ENCODE measurements at regions of chr19 and their contacts with region 1.

Region 1: GRCh38 chr19:17859533-17860330 is at the start of gene RPL18A:
- DNase-seq: peak; percentile 100
- H3K4me3 Mint-ChIP-seq: peak within 1 kb of the TSS; percentile 100
- H3K27ac Mint-ChIP-seq: peak within 1 kb of the TSS; percentile 99
- H3K4me1 Mint-ChIP-seq: peaks cover 41% of the 10 kb centered on the region
- H3K27me3 Mint-ChIP-seq: peaks cover 3% of the 10 kb centered on the region
- total RNA-seq, gene RPL18A: 3,104 to 3,138 TPM

Region 2: DNA sequence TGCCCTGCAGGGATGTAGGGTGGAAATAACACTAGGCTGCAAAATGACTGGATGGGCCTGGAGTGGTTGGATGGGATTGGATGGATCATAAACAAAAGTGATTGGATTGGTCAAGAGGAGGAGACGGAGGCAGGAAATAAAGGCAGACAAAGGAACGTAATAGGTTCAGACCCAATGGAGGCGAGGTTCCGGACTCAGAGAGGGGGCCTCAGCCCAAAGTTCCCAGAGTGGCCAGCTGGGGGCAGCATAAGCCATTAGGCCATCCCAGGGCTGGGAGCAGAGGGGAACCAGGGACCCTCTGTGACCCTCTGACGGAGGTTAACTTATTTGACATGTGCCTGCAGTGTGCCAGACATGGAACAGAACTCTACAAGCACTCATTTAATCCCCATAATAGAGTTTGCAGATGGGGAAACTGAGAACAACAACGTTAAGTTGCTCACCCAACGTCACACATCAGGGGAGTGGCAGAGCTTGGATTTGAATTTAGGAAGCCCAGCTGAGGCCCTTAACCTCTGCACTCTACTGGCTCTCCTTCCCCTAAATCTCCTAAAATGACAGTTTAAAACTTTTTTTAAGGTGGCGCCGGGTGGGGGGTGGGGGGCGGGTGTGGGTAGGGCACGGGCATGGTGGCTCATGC is 155.8 kb before region 1 on chr19:
- CTCF ChIA-PET with region 1: interaction called, 41 read pairs
- POLR2A ChIA-PET with region 1: no interaction called
- intact Hi-C with region 1: loop called (anchors 1 kb)
- DNase-seq: peak; percentile 81
- H3K4me3 Mint-ChIP-seq: no peak overlapping the region
- H3K27ac Mint-ChIP-seq: no peak overlapping the region
- H3K4me1 Mint-ChIP-seq: no peaks in the 10 kb centered on the region
- H3K27me3 Mint-ChIP-seq: peaks cover 4% of the 10 kb centered on the region

Region 3: DNA sequence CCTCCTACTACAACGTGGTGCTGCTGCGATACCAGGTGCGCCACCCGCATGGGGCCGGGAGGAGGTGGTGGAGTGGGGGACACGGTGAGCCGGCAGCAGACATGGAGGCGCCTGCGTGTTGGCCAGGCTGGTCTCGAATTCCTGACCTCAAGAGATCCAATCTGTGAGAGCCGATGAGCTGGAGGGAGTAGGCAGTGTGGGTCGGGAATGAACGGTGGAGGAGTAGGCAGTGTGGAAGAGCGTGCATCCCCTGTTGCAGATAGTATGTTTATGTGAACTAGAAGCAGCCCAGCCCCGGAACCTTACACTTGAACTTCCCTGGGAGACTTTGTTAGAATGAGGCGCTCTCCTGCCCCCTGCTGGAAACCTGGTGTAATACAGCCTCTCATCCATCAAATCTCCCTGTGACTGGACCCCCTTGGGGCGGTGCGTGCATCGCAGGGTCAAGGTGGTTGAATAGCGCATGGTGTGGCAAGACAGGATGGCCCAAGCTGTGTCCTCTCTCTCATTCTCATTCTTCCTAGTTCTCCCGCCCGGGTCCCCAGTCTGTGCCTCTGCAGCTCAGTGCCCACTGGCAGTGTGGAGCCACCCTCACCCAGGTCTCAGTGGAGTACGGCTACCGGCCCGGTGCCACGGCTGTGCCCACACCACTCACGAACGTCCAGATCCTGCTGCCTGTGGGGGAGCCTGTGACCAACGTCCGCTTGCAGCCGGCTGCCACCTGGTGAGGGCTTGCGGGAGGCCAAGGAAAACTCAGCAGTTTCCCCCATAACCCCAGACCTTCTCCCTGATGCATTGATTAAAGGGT is 75.3 kb before region 1 on chr19:
- CTCF ChIA-PET with region 1: interaction called, 6 read pairs
- POLR2A ChIA-PET with region 1: interaction called, 4 read pairs
- intact Hi-C with region 1: loop called (anchors 1 kb)
- DNase-seq: peak; percentile 83
- H3K4me3 Mint-ChIP-seq: no peak overlapping the region
- H3K27ac Mint-ChIP-seq: no peak overlapping the region
- H3K4me1 Mint-ChIP-seq: peaks cover 4% of the 10 kb centered on the region
- H3K27me3 Mint-ChIP-seq: no peaks in the 10 kb centered on the region

Region 4: GRCh38 chr19:17873786-17874757 is 14.3 kb after region 1 on chr19:
- CTCF ChIA-PET with region 1: interaction called, 34 read pairs
- POLR2A ChIA-PET with region 1: interaction called, 40 read pairs
- intact Hi-C with region 1: loop called (anchors 1 kb)
- DNase-seq: peak; percentile 84
- H3K4me3 Mint-ChIP-seq: peak overlapping the region; percentile 81
- H3K27ac Mint-ChIP-seq: no peak overlapping the region
- H3K4me1 Mint-ChIP-seq: peaks cover 17% of the 10 kb centered on the region
- H3K27me3 Mint-ChIP-seq: no peaks in the 10 kb centered on the region

Region 5: GRCh38 chr19:17938092-17938845 is 78.5 kb after region 1 on chr19:
- CTCF ChIA-PET with region 1: interaction called, 186 read pairs
- POLR2A ChIA-PET with region 1: interaction called, 93 read pairs
- intact Hi-C with region 1: no loop called
- DNase-seq: peak; percentile 91
- H3K4me3 Mint-ChIP-seq: no peak overlapping the region
- H3K27ac Mint-ChIP-seq: no peak overlapping the region
- H3K4me1 Mint-ChIP-seq: peaks cover 13% of the 10 kb centered on the region
- H3K27me3 Mint-ChIP-seq: no peaks in the 10 kb centered on the region